SK-N-SH (cell line): ENCODE measurements at regions of chr14 and their contacts with region 1.

Region 1: GRCh38 chr14:94051115-94051514 is 25.0 kb downstream of the OTUB2 start:
- DNase-seq: no peak
- H3K4me3 ChIP-seq: no peak overlapping the region
- H3K27ac ChIP-seq: no peak overlapping the region
- H3K4me1 ChIP-seq: peaks cover 0 to 18% of the 10 kb centered on the region in 2 experiments; a peak in 2 of 4 replicates
- H3K27me3 ChIP-seq: no peaks in the 10 kb centered on the region
- CTCF ChIP-seq: peak; percentile 49
- EP300 ChIP-seq: no peak
- RAD21 ChIP-seq: peak; percentile 44

Region 2: GRCh38 chr14:94066089-94066676 is 15.1 kb after region 1 on chr14:
- CTCF ChIA-PET with region 1: interaction called, 14 read pairs
- POLR2A ChIA-PET with region 1: no interaction called
- DNase-seq: no peak
- H3K4me3 ChIP-seq: no peak overlapping the region
- H3K27ac ChIP-seq: no peak overlapping the region; a peak in 1 of 4 replicates
- H3K4me1 ChIP-seq: peaks cover 8 to 10% of the 10 kb centered on the region in 2 experiments; a peak in 2 of 4 replicates
- H3K27me3 ChIP-seq: no peaks in the 10 kb centered on the region
- CTCF ChIP-seq: no peak
- EP300 ChIP-seq: no peak
- RAD21 ChIP-seq: no peak

Region 3: DNA sequence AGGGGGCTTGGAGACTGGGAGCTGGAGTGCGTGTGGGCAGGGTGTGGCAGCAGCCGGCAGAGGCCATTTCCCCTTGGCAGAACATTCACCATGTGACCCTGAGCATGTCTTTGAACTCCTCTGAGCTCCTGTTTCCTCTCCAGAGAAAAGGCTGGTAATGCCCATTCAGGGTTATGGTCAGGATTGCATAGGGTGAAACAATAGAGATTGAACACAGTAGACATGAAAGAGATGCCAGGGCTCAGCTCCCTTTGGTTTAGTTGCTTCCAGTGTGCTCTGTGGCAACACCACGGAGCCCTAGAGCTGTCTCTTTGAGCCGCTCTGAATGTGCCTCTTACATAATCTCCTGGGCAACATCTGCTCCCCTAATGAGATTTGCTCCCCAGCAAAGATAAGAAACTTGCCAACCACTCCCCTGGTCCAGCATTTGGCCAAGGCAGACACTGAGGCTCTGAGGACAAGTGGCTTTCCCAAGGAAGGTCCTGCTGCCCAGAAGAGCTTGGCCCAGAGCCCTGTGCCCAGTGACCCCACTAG is 64.0 kb after region 1 on chr14:
- CTCF ChIA-PET with region 1: interaction called, 14 read pairs
- POLR2A ChIA-PET with region 1: no interaction called
- DNase-seq: peak; percentile 64
- H3K4me3 ChIP-seq: no peak overlapping the region
- H3K27ac ChIP-seq: peak overlapping the region in 1 of 2 experiments; percentile 5; a peak in 1 of 4 replicates
- H3K4me1 ChIP-seq: peaks cover 0 to 38% of the 10 kb centered on the region in 2 experiments; a peak in 1 of 4 replicates
- H3K27me3 ChIP-seq: no peaks in the 10 kb centered on the region
- CTCF ChIP-seq: no peak
- EP300 ChIP-seq: peak in 1 of 2 experiments; percentile 44; a peak in 1 of 4 replicates
- RAD21 ChIP-seq: no peak

Region 4: GRCh38 chr14:94143239-94143638 is 92.1 kb after region 1 on chr14:
- CTCF ChIA-PET with region 1: interaction called, 100 read pairs
- POLR2A ChIA-PET with region 1: no interaction called
- DNase-seq: no peak
- H3K4me3 ChIP-seq: no peak overlapping the region
- H3K27ac ChIP-seq: no peak overlapping the region
- H3K4me1 ChIP-seq: no peaks in the 10 kb centered on the region
- H3K27me3 ChIP-seq: no peaks in the 10 kb centered on the region
- CTCF ChIP-seq: peak; percentile 35; the same call in 1 of the 2 replicates
- EP300 ChIP-seq: no peak
- RAD21 ChIP-seq: peak; percentile 37